Caco-2 (cell line): ENCODE measurements at regions of chr2 and their contacts with region 1.

Region 1: DNA sequence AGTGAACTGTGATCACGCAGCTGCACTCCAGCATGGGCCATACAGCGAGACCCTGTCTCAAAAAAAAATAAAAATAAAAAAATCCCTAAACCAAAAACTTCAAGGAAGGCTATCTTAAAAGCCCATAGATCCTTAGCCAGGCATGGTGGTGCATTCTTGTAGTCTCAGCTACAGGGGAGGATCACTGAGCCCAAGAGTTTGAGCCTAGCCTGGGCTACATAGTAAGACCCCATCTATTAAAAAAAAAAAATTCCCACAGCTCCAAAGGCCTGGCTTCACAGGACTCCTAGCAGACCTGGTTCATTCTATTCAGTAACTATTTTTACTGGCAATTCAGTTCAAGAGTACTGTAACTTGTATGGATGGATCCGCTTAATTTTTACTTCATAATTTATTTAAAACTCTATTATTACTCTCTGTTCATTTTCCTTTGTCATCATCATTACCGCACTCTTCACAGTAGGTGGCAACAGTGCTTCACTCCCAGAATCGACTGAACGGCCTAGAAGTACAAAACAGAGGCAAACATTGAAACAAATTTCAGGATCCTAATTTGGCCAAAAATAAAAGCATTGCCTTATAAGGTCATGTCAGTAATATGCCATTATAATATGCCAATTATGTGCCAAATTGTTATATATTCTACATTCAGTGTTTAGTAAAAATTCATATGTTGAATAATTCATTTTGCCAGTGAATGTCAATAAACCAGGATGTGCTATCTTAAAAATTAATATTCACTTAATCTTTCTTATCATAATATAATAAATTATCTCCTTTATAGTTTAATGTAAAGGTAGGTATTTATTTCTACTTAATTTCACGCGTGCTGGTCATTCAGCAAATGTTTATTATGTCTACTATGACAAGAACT is 14.3 kb upstream of the STAM2 start:
- DNase-seq: peak; percentile 50 to 57
- H3K4me3 ChIP-seq: no peak overlapping the region
- H3K4me3 Mint-ChIP-seq: no peak overlapping the region
- H3K27ac Mint-ChIP-seq: no peak overlapping the region
- H3K4me1 ChIP-seq: peaks cover 4% of the 10 kb centered on the region; the same call in 1 of the 2 replicates
- H3K4me1 Mint-ChIP-seq: peaks cover 14% of the 10 kb centered on the region
- H3K27me3 ChIP-seq: no peaks in the 10 kb centered on the region
- H3K27me3 Mint-ChIP-seq: no peaks in the 10 kb centered on the region
- CTCF ChIP-seq: peak; percentile 78 to 83

Region 2: GRCh38 chr2:152335010-152335725 is 145.3 kb after region 1 on chr2 and contains the start of gene FMNL2:
- CTCF ChIA-PET with region 1: no interaction called
- POLR2A ChIA-PET with region 1: no interaction called
- intact Hi-C with region 1: loop called (anchors 5 kb)
- DNase-seq: peak; percentile 89 to 94
- H3K4me3 ChIP-seq: peak within 1 kb of the TSS; percentile 79
- H3K4me3 Mint-ChIP-seq: peak within 1 kb of the TSS; percentile 84
- H3K27ac Mint-ChIP-seq: peak within 1 kb of the TSS; percentile 76
- H3K4me1 ChIP-seq: peaks cover 12% of the 10 kb centered on the region
- H3K4me1 Mint-ChIP-seq: peaks cover 13% of the 10 kb centered on the region
- H3K27me3 ChIP-seq: no peaks in the 10 kb centered on the region
- H3K27me3 Mint-ChIP-seq: no peaks in the 10 kb centered on the region
- CTCF ChIP-seq: no peak
- total RNA-seq, gene FMNL2: 38.0 and 38.2 TPM in 2 replicates

Region 3: GRCh38 chr2:152558158-152558984 is 368.5 kb after region 1 on chr2:
- CTCF ChIA-PET with region 1: no interaction called
- POLR2A ChIA-PET with region 1: no interaction called
- intact Hi-C with region 1: loop called (anchors 1 kb)
- DNase-seq: no peak
- H3K4me3 ChIP-seq: no peak overlapping the region
- H3K4me3 Mint-ChIP-seq: no peak overlapping the region
- H3K27ac Mint-ChIP-seq: no peak overlapping the region
- H3K4me1 ChIP-seq: no peaks in the 10 kb centered on the region
- H3K4me1 Mint-ChIP-seq: no peaks in the 10 kb centered on the region
- H3K27me3 ChIP-seq: no peaks in the 10 kb centered on the region
- H3K27me3 Mint-ChIP-seq: no peaks in the 10 kb centered on the region
- CTCF ChIP-seq: no peak

Region 4: DNA sequence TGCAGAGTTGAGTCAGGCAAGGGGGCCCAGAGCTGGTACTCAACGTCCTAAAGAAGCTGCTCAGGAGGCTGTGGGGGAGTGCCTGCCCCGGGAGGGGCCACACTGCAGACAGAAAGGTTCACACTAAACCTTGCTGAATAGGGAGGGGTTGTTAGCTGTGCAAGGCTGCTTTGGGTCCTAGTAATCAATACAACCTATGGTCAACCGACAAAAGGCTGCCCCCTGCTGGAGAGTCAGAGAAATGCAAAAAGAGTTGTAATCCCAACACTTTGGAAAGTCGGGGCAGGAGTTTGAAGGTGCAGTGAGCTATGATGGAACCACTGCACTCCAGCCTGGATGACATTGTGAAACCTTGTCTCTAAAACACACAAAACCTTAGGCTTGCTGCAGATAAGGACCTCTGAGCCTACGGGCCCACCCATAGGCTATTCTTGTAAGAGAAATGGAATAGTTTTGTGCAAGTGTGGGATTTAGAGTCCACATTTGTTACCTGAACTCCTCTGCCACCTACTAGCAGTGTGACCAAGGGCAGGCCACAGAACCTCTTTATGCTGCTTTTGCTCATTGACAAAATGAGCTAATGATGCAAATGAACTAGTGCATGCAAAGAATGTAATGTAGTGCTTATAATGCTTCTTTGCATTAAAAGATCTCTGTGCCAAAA is 445.9 kb after region 1 on chr2:
- CTCF ChIA-PET with region 1: interaction called, 6 read pairs
- POLR2A ChIA-PET with region 1: no interaction called
- intact Hi-C with region 1: loop called (anchors 1 kb)
- DNase-seq: peak; percentile 68 to 75
- H3K4me3 ChIP-seq: no peak overlapping the region
- H3K4me3 Mint-ChIP-seq: no peak overlapping the region
- H3K27ac Mint-ChIP-seq: no peak overlapping the region
- H3K4me1 ChIP-seq: no peaks in the 10 kb centered on the region
- H3K4me1 Mint-ChIP-seq: no peaks in the 10 kb centered on the region
- H3K27me3 ChIP-seq: no peaks in the 10 kb centered on the region
- H3K27me3 Mint-ChIP-seq: no peaks in the 10 kb centered on the region
- CTCF ChIP-seq: peak; percentile 71 to 82